H1 (cell line): ENCODE measurements at regions of chr17 and their contacts with region 1.

Region 1: GRCh38 chr17:4366327-4367063 is at the start of gene UBE2G1:
- DNase-seq: peak; percentile 96 to 99
- H3K4me3 ChIP-seq: peak within 1 kb of the TSS; percentile 77 to 98 (median 82)
- H3K27ac ChIP-seq: peak within 1 kb of the TSS; percentile 85
- H3K4me1 ChIP-seq: peaks cover 0 to 5% (median 2%) of the 10 kb centered on the region in 4 experiments; a peak in 2 of 7 replicates
- H3K27me3 ChIP-seq: no peaks in the 10 kb centered on the region
- CTCF ChIP-seq: peak; percentile 23 to 68 (median 60)
- EP300 ChIP-seq: peak in 1 of 2 experiments; percentile 34; a peak in 1 of 3 replicates
- POLR2A ChIP-seq: peak; percentile 89 to 92
- RAD21 ChIP-seq: peak; percentile 82 to 89
- total RNA-seq, gene UBE2G1: 168 and 170 TPM in 2 replicates

Region 2: GRCh38 chr17:4249452-4250029 is 117.0 kb before region 1 on chr17:
- CTCF ChIA-PET with region 1: no interaction called
- POLR2A ChIA-PET with region 1: no interaction called
- DNase-seq: no peak
- H3K4me3 ChIP-seq: no peak overlapping the region
- H3K27ac ChIP-seq: no peak overlapping the region
- H3K4me1 ChIP-seq: peaks cover 0 to 15% (median 10%) of the 10 kb centered on the region in 4 experiments; a peak in 5 of 7 replicates
- H3K27me3 ChIP-seq: no peaks in the 10 kb centered on the region
- CTCF ChIP-seq: peak in 2 of 3 experiments; percentile 52 to 59; a peak in 3 of 4 replicates
- EP300 ChIP-seq: no peak
- POLR2A ChIP-seq: no peak
- RAD21 ChIP-seq: peak; percentile 8 to 31; a peak in 1 of 4 replicates

Region 3: GRCh38 chr17:4381690-4382671 is 15.5 kb after region 1 on chr17:
- CTCF ChIA-PET with region 1: interaction called, 3 read pairs
- POLR2A ChIA-PET with region 1: interaction called, 19 read pairs
- DNase-seq: no peak
- H3K4me3 ChIP-seq: no peak overlapping the region
- H3K27ac ChIP-seq: no peak overlapping the region
- H3K4me1 ChIP-seq: peaks cover 0 to 7% (median 3%) of the 10 kb centered on the region in 4 experiments; a peak in 3 of 7 replicates
- H3K27me3 ChIP-seq: no peaks in the 10 kb centered on the region
- CTCF ChIP-seq: no peak
- EP300 ChIP-seq: no peak
- POLR2A ChIP-seq: no peak
- RAD21 ChIP-seq: no peak